BJ (cell line): ENCODE measurements at regions of chr9 and their contacts with region 1.

Region 1: GRCh38 chr9:19925817-19926503 is 137.1 kb upstream of the SLC24A2 start:
- DNase-seq: peak; percentile 9
- H3K4me3 ChIP-seq: peak overlapping the region; percentile 34
- H3K27me3 ChIP-seq: peaks cover 6% of the 10 kb centered on the region
- CTCF ChIP-seq: peak; percentile 94

Region 2: GRCh38 chr9:19732441-19732951 is 193.5 kb before region 1 on chr9:
- CTCF ChIA-PET with region 1: no interaction called
- POLR2A ChIA-PET with region 1: no interaction called
- DNase-seq: no peak
- H3K4me3 ChIP-seq: no peak overlapping the region
- H3K27me3 ChIP-seq: no peaks in the 10 kb centered on the region
- CTCF ChIP-seq: no peak

Region 3: GRCh38 chr9:19936598-19936997 is 10.6 kb after region 1 on chr9:
- CTCF ChIA-PET with region 1: interaction called, 10 read pairs
- POLR2A ChIA-PET with region 1: no interaction called
- DNase-seq: no peak
- H3K4me3 ChIP-seq: no peak overlapping the region
- H3K27me3 ChIP-seq: no peaks in the 10 kb centered on the region
- CTCF ChIP-seq: no peak